ENCODE measurements at regions of chr2 and their contacts with region 1.

Region 1: DNA sequence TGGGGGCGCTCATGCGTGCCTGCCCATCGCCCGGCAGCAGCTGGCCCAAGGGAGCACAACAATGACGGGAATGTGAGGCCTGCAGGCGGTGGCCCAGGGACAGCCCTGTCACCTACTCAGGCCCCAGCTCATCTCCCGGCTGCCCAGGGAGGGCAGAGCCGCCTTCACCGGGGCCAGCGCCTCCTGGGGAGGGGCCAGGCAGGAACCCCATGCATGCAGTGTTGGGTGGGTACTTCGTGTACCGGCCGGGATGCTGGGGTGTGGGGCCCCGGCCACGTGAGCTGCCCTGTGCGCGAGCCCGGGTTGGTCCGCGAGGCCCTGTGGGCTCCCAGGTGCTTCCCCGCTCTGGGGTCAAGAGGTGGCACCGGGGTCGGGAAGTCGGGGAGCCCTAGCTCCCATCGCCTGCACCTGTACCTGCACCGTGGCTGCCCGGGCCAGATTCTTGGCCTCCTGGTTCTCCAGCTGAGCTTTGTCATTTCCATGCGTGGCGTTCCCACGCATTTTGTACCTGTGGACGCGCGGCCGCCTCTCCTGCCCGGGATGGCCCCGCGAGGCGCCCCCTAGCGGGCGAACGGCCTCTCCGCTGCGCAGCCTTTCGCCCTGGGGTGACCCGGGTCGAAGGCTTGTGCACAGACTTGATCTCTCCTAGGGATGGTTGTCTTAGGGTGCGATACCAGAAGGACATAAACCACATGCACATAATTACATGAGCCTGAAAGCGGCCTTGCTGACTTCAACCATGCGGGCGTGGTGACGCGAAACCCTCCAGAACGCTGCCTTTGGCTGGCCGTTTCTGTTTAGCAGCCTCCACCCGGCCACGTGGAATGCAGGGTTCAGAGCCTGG is 950 bp downstream of the KLHL30 start:
- DNase-seq: peak in 1 of 2 donors; percentile 80
- ATAC-seq: peak; percentile 22 to 39 (median 30)
- H3K4me3 ChIP-seq: peak overlapping the region; percentile 83
- H3K27ac ChIP-seq: peak overlapping the region; percentile 99
- H3K4me1 ChIP-seq: peaks cover 56% of the 10 kb centered on the region
- H3K27me3 ChIP-seq: no peaks in the 10 kb centered on the region
- CTCF ChIP-seq: peak; percentile 75

Region 2: DNA sequence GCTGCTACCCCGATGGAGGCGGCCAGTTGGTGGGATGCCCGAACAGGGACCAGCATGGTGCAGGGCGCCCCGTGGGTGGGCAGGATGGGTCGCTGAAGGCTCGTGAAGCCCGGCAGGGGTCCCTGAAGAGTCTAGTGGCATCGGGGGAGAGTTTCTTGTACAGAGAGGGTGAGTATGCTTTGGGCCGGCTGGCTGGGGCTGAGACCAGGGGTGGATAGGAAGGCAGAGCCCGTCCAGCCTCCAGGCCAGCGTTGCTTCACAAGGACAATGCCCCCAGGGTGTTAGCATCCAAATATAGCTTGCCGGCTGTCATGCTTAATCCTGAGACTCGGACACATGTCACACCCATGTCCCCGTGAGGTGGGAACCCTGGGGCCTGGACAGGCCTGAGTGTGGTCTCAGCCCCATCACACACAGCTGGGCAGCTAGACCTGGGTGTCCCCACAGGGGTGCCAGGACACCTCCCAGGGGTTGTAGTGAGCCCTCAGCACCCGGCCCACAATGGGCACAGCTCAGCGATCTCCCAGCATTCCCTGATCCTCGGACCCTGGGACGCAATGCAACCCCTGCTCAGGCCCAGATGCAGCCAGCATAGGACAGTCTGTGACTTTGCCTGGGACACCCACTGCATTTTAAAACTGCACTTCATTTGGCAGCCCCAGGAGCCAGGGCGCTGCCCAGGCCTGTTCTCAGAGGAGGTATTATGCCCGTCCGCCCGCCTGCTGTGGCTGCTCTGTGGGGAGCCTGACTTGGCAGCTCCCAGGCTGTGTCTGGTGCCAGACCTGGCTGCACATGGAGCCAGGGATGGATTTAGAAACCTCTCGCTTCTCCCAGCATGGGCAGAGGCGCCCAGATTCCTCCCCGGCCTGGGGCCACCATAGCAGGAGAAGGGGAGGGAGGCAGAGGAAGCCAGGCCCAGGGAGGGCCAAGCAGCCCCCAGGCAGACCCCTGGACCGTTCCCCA is 243.6 kb before region 1 on chr2:
- intact Hi-C with region 1: loop called (anchors 5 to 10 kb)
- DNase-seq: peak; percentile 76 to 93
- ATAC-seq: peak; percentile 75 to 85 (median 82)
- H3K4me3 ChIP-seq: peak overlapping the region; percentile 41
- H3K27ac ChIP-seq: peak overlapping the region; percentile 98
- H3K4me1 ChIP-seq: peaks cover 63% of the 10 kb centered on the region
- H3K27me3 ChIP-seq: no peaks in the 10 kb centered on the region
- CTCF ChIP-seq: no peak

Region 3: DNA sequence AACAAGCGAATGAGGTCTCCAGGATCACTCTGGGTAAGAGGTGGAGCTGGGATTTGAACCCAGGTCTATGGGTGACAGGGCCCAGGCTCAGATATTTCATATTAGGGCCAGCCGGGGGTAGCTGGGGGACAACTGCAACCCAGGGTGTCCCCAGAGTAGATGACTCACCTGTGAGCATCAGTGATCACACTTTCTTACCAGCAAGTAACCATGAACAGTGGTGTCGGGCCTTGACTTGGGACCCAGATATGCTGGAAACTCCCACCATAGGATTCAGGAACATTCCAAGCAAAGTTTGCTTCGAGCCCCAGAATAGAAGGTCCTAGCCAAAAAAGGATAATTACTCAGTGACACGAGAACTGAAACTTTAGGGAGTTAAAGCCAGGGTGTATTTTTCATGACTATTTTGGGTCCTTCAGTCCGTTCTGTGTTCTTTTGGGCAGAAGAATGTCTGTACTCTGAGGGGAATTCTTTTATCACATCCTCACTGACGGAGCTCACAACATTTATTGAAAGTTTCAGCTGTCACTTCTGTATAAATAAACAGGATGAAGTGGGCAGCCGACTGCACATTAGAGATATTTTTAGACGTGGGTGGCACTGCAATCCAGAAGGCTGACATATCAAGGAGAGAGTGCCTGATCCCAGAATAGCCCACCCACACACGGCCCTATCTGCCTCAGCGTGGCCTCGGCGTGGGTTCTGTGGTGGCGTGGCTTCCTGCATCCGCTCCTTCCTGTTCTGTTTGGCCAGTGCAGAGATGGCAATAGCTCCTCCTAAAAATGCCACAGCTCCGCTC is 234.4 kb before region 1 on chr2:
- intact Hi-C with region 1: loop called in 1 of 2 experiments (anchors 10 kb)
- DNase-seq: peak; percentile 77 to 88
- ATAC-seq: peak; percentile 86 to 94 (median 93)
- H3K4me3 ChIP-seq: peak overlapping the region; percentile 24
- H3K27ac ChIP-seq: peak overlapping the region; percentile 93
- H3K4me1 ChIP-seq: peaks cover 23% of the 10 kb centered on the region
- H3K27me3 ChIP-seq: no peaks in the 10 kb centered on the region
- CTCF ChIP-seq: no peak

Region 4: GRCh38 chr2:238187618-238188548 is 48.5 kb after region 1 on chr2:
- intact Hi-C with region 1: no loop called
- DNase-seq: no peak
- ATAC-seq: no peak
- H3K4me3 ChIP-seq: no peak overlapping the region
- H3K27ac ChIP-seq: no peak overlapping the region
- H3K4me1 ChIP-seq: no peaks in the 10 kb centered on the region
- H3K27me3 ChIP-seq: no peaks in the 10 kb centered on the region
- CTCF ChIP-seq: no peak

Measured in psoas muscle (tissue), 8 donors.